ENCODE measurements at regions of chr2 and their contacts with region 1.

Region 1: GRCh38 chr2:60998628-60999545 is 18.6 kb upstream of the PEX13 start:
- DNase-seq: peak; percentile 79
- ATAC-seq: peak; percentile 69
- H3K4me3 ChIP-seq: no peak overlapping the region
- H3K4me3 Mint-ChIP-seq: no peak overlapping the region
- H3K27ac ChIP-seq: no peak overlapping the region
- H3K27ac Mint-ChIP-seq: peak overlapping the region; percentile 65
- H3K4me1 ChIP-seq: peaks cover 31 to 34% of the 10 kb centered on the region in 2 donors
- H3K4me1 Mint-ChIP-seq: peaks cover 42% of the 10 kb centered on the region
- H3K27me3 ChIP-seq: no peaks in the 10 kb centered on the region
- H3K27me3 Mint-ChIP-seq: no peaks in the 10 kb centered on the region
- CTCF ChIP-seq: peak; percentile 89

Region 2: DNA sequence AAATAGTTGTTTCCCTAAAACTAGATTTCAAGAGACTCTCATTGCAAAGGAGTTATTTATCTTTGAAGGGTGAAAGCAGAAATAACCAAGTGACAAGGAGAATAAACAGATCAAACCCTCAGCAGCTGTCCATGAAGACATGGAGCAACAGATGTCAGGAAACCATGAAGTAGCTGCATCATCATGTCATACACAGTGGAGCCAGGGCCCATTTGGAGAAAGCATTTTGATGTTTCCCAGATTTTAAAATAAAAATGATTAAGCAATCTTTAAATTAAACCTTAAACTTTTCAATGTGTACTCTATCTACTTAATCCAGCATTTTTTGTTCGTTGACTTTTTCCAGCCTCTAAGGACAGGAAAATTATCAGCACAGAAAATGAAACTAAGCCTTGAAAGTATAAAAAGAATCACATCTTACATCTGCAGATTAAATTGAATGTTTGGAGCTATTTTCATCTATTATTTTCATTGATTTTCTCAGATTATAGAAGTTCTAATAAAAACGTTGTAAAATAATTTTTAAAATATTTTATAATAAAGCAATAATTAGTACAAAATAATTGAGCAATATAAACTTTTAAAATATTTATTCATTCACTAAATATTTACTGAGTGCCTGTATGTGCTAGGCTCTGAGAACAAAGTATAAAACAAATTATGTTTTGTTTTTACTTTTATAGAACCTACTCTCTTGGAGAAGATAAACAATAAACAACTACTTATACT is 1305.5 kb before region 1 on chr2:
- CTCF ChIA-PET with region 1: no interaction called
- POLR2A ChIA-PET with region 1: no interaction called
- intact Hi-C with region 1: no loop called
- DNase-seq: no peak
- ATAC-seq: no peak
- H3K4me3 ChIP-seq: no peak overlapping the region
- H3K4me3 Mint-ChIP-seq: no peak overlapping the region
- H3K27ac ChIP-seq: no peak overlapping the region
- H3K27ac Mint-ChIP-seq: no peak overlapping the region
- H3K4me1 ChIP-seq: no peaks in the 10 kb centered on the region
- H3K4me1 Mint-ChIP-seq: no peaks in the 10 kb centered on the region
- H3K27me3 ChIP-seq: no peaks in the 10 kb centered on the region
- H3K27me3 Mint-ChIP-seq: no peaks in the 10 kb centered on the region
- CTCF ChIP-seq: no peak

Region 3: GRCh38 chr2:60707750-60708371 is 291.0 kb before region 1 on chr2:
- CTCF ChIA-PET with region 1: interaction called, 120 read pairs
- POLR2A ChIA-PET with region 1: no interaction called
- intact Hi-C with region 1: no loop called
- DNase-seq: peak; percentile 60
- ATAC-seq: peak; percentile 43
- H3K4me3 ChIP-seq: no peak overlapping the region
- H3K4me3 Mint-ChIP-seq: no peak overlapping the region
- H3K27ac ChIP-seq: no peak overlapping the region
- H3K27ac Mint-ChIP-seq: no peak overlapping the region
- H3K4me1 ChIP-seq: no peaks in the 10 kb centered on the region
- H3K4me1 Mint-ChIP-seq: no peaks in the 10 kb centered on the region
- H3K27me3 ChIP-seq: no peaks in the 10 kb centered on the region
- H3K27me3 Mint-ChIP-seq: peaks cover 14% of the 10 kb centered on the region
- CTCF ChIP-seq: peak; percentile 89

Region 4: DNA sequence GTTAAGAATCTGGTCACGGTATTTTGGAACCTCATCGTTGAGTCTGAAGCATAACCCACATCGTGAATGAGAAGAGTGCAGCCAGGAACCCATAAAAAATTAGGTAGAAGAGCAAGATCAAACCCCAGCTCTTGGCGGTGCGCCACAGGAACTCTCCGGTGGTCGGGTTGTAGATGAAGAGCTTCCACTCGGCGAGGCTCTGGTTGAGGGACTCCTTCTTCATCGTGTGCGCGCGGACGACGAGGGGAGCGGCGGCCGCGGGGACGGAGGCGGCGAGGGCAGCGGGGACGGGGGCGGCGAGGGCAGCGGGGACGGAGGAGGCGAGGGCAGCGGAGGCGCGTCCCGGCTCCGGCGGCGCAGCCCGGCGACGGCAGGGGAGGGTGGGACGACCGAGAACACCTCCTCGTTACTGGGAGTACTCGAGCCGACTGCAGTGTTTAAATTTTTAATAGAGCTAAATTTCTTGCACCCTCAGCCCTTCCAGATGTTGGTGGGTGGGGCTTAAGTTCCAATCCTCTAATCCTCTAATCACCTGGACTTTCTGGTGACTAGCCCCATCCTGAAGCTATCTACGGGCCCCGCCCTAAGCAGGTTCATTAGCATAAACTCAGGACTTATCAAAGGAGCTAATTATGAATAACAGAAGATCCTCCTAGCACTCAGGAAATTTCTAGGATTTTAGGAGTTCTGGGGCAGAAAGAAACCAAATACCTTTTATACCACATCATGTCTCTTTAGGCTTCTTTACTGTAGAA is 263.2 kb before region 1 on chr2:
- CTCF ChIA-PET with region 1: no interaction called
- POLR2A ChIA-PET with region 1: no interaction called
- intact Hi-C with region 1: no loop called
- DNase-seq: peak; percentile 30
- ATAC-seq: no peak
- H3K4me3 ChIP-seq: peak overlapping the region in 4 of 5 experiments; percentile 10 to 61 (median 40)
- H3K4me3 Mint-ChIP-seq: peak overlapping the region; percentile 91
- H3K27ac ChIP-seq: no peak overlapping the region
- H3K27ac Mint-ChIP-seq: no peak overlapping the region
- H3K4me1 ChIP-seq: peaks cover 3 to 5% of the 10 kb centered on the region in 2 donors
- H3K4me1 Mint-ChIP-seq: peaks cover 10% of the 10 kb centered on the region
- H3K27me3 ChIP-seq: peaks cover 0 to 34% (median 9%) of the 10 kb centered on the region in 4 experiments
- H3K27me3 Mint-ChIP-seq: peaks cover 32% of the 10 kb centered on the region
- CTCF ChIP-seq: no peak

Region 5: GRCh38 chr2:60818272-60818671 is 180.6 kb before region 1 on chr2:
- CTCF ChIA-PET with region 1: interaction called, 34 read pairs
- POLR2A ChIA-PET with region 1: no interaction called
- intact Hi-C with region 1: loop called (anchors 1 kb)
- DNase-seq: peak; percentile 56
- ATAC-seq: peak; percentile 57
- H3K4me3 ChIP-seq: no peak overlapping the region
- H3K4me3 Mint-ChIP-seq: peak overlapping the region; percentile 34
- H3K27ac ChIP-seq: no peak overlapping the region
- H3K27ac Mint-ChIP-seq: peak overlapping the region; percentile 46
- H3K4me1 ChIP-seq: peaks cover 32 to 37% of the 10 kb centered on the region in 2 donors
- H3K4me1 Mint-ChIP-seq: peaks cover 44% of the 10 kb centered on the region
- H3K27me3 ChIP-seq: no peaks in the 10 kb centered on the region
- H3K27me3 Mint-ChIP-seq: no peaks in the 10 kb centered on the region
- CTCF ChIP-seq: peak; percentile 51

Region 6: GRCh38 chr2:60908031-60908775 is 90.7 kb before region 1 on chr2:
- CTCF ChIA-PET with region 1: interaction called, 44 read pairs
- POLR2A ChIA-PET with region 1: no interaction called
- intact Hi-C with region 1: no loop called
- DNase-seq: no peak
- ATAC-seq: no peak
- H3K4me3 ChIP-seq: no peak overlapping the region
- H3K4me3 Mint-ChIP-seq: no peak overlapping the region
- H3K27ac ChIP-seq: peak overlapping the region in 1 of 2 donors; percentile 36
- H3K27ac Mint-ChIP-seq: no peak overlapping the region
- H3K4me1 ChIP-seq: no peaks in the 10 kb centered on the region
- H3K4me1 Mint-ChIP-seq: peaks cover 19% of the 10 kb centered on the region
- H3K27me3 ChIP-seq: no peaks in the 10 kb centered on the region
- H3K27me3 Mint-ChIP-seq: no peaks in the 10 kb centered on the region
- CTCF ChIP-seq: no peak

Region 7: GRCh38 chr2:60961501-60961900 is 37.4 kb before region 1 on chr2:
- CTCF ChIA-PET with region 1: interaction called, 52 read pairs
- POLR2A ChIA-PET with region 1: interaction called, 3 read pairs
- intact Hi-C with region 1: loop called (anchors 5 kb)
- DNase-seq: no peak
- ATAC-seq: no peak
- H3K4me3 ChIP-seq: no peak overlapping the region
- H3K4me3 Mint-ChIP-seq: no peak overlapping the region
- H3K27ac ChIP-seq: no peak overlapping the region
- H3K27ac Mint-ChIP-seq: no peak overlapping the region
- H3K4me1 ChIP-seq: peaks cover 20 to 22% of the 10 kb centered on the region in 2 donors
- H3K4me1 Mint-ChIP-seq: peaks cover 31% of the 10 kb centered on the region
- H3K27me3 ChIP-seq: no peaks in the 10 kb centered on the region
- H3K27me3 Mint-ChIP-seq: no peaks in the 10 kb centered on the region
- CTCF ChIP-seq: no peak

Region 8: GRCh38 chr2:60984720-60985119 is 14.2 kb before region 1 on chr2:
- CTCF ChIA-PET with region 1: interaction called, 20 read pairs
- POLR2A ChIA-PET with region 1: interaction called, 3 read pairs
- intact Hi-C with region 1: no loop called
- DNase-seq: peak; percentile 69
- ATAC-seq: peak; percentile 78
- H3K4me3 ChIP-seq: peak overlapping the region in 1 of 5 experiments; percentile 48
- H3K4me3 Mint-ChIP-seq: peak overlapping the region; percentile 75
- H3K27ac ChIP-seq: peak overlapping the region in 1 of 2 donors; percentile 56
- H3K27ac Mint-ChIP-seq: peak overlapping the region; percentile 62
- H3K4me1 ChIP-seq: peaks cover 41 to 45% of the 10 kb centered on the region in 2 donors
- H3K4me1 Mint-ChIP-seq: peaks cover 45% of the 10 kb centered on the region
- H3K27me3 ChIP-seq: no peaks in the 10 kb centered on the region
- H3K27me3 Mint-ChIP-seq: no peaks in the 10 kb centered on the region
- CTCF ChIP-seq: no peak

Region 9: DNA sequence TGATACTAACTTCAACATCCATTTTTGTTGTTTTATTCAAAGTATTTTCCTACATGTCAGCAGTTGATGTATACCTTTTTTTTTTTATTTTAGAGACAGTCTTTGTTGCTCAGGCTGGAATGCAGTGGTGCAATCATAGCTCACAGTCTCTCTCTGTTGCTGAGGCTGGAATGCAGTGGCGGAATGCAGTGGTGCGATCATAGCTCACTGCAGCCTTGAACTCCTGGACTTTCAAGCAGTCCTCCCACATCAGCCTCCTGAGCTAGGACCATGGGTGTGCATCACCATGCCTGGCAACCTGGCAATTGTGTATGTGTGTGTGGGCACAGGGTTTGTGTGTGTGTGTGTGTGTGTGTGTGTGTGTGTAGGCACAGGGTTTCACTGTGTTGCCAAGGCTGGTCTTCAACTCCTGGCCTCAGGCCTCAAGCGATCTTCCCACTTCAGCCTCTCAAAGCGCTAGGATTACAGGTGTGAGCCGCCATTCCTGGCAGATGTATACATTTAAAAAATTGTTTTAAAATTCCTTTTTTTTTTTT is 91.6 kb after region 1 on chr2:
- CTCF ChIA-PET with region 1: no interaction called
- POLR2A ChIA-PET with region 1: no interaction called
- intact Hi-C with region 1: no loop called
- DNase-seq: no peak
- ATAC-seq: no peak
- H3K4me3 ChIP-seq: no peak overlapping the region
- H3K4me3 Mint-ChIP-seq: no peak overlapping the region
- H3K27ac ChIP-seq: no peak overlapping the region
- H3K27ac Mint-ChIP-seq: no peak overlapping the region
- H3K4me1 ChIP-seq: no peaks in the 10 kb centered on the region
- H3K4me1 Mint-ChIP-seq: no peaks in the 10 kb centered on the region
- H3K27me3 ChIP-seq: no peaks in the 10 kb centered on the region
- H3K27me3 Mint-ChIP-seq: no peaks in the 10 kb centered on the region
- CTCF ChIP-seq: no peak

Measured in B cell (primary cell).